Cardiac septum (tissue), 1 donor: ENCODE measurements at regions of chr11 and their contacts with region 1.

Region 1: DNA sequence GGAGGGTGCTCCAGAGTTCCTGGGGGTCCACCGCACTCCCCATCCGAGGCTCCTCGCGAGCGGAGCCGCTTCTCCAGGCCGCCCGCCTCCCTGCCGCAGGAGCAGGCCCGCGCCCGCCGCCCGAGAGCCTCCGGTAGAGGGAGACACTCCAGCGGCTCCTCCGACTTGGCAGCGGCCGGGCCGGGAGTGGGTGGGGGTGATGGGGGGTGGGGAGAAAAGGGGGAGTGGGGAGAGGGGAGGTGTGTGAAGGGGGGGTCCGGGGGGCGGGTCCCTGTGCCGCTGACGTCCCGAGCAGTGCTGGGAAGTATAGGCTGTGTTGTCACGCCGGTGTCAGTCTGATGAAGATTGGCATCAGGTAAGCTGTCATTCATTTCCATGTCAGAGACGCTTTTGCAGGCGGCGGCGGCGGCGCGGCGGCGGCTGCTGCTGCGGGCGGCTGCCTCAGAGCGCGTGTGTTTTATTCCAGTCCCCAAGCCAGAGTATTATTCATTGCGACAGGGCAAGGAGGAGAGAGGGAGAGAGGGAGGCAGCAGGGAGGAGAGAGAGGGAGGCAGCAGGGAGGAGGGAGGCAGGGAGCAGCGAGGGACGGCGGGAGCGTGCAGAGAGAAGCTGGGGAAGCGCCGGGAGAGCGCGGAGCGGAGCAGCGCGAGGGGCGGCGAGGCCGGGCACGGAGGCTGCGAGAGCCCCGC is at the start of gene PKNOX2:
- DNase-seq: peak; percentile 84
- total RNA-seq, gene PKNOX2: 7.1 TPM

Region 2: DNA sequence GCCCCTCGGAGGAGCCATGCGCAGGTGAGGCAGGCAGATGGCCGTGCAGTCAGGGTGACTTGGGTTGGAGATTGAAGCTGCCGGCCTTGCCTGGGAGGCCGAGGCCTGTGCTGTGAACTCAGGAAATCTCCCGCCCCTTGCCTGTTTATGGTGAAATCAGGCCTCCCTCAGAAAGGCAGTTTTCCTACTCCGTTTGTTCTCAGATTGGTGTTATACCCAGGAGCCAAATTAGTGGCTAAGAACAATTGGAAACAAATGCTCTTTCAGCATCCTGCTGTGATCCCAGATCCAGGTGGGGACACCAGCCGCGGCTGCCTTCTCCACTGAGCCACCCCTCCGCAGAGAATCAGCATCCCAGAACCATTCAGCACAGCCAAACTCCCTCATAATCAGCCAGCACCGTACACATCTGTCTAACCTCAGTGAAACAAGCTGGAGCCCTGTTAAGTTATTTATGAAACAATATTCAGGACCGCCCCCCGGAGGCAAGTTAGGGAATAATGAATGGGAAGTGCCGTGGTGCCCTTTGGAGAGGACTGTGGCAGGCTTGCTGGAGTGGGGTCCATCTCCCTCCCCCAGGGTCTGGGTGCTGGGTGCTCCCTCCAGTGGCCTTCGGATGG is 59.9 kb after region 1 on chr11:
- intact Hi-C with region 1: loop called (anchors 5 kb)
- DNase-seq: no peak

Region 3: DNA sequence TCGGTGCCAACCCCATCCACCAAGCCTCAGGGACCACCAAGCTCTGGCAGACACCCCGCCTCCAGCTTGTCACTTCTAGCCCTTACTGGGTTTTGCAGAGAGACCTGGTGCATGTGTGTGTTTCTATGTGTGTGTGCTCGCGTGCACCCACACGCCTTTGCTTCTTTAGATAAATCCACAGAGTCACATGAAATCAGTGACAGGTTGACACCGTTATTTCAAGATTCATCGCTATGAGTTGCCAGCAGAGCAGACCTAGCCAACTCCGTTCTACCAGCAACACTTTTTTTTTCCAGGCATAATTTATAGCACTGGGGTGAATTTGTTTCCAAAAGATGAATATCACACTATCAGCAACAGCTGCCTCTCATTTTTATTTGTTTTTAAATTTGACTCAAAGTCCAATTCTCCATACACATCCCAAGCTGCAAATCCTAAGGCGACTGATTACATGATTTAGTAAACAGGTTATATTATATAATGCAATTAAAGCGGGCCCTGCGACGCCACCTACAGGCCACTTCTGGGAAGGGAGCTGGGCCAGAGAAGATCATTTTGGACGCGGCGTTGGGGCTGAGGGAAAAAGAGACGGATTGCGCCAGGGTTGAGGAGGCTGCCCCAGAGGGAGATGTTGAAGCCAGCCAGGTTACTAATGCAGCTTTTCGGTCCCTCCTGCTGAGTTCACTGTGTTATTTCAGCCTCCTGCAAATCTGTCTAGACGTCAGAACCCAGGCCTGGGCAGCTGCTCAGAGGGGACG is 181.0 kb after region 1 on chr11:
- intact Hi-C with region 1: loop called (anchors 1 kb)
- DNase-seq: peak; percentile 87

Region 4: GRCh38 chr11:125404776-125405435 is 240.3 kb after region 1 on chr11:
- intact Hi-C with region 1: loop called (anchors 2 kb)
- DNase-seq: peak; percentile 88